ENCODE measurements at regions of chr19 and their contacts with region 1.

Region 1: GRCh38 chr19:4065430-4066175 is 1.1 kb downstream of the ZBTB7A start:
- DNase-seq: peak; percentile 81 to 94
- H3K4me3 ChIP-seq: no peak overlapping the region
- H3K27ac ChIP-seq: no peak overlapping the region
- H3K4me1 ChIP-seq: peaks cover 30% of the 10 kb centered on the region
- H3K27me3 ChIP-seq: no peaks in the 10 kb centered on the region
- CTCF ChIP-seq: no peak

Region 2: DNA sequence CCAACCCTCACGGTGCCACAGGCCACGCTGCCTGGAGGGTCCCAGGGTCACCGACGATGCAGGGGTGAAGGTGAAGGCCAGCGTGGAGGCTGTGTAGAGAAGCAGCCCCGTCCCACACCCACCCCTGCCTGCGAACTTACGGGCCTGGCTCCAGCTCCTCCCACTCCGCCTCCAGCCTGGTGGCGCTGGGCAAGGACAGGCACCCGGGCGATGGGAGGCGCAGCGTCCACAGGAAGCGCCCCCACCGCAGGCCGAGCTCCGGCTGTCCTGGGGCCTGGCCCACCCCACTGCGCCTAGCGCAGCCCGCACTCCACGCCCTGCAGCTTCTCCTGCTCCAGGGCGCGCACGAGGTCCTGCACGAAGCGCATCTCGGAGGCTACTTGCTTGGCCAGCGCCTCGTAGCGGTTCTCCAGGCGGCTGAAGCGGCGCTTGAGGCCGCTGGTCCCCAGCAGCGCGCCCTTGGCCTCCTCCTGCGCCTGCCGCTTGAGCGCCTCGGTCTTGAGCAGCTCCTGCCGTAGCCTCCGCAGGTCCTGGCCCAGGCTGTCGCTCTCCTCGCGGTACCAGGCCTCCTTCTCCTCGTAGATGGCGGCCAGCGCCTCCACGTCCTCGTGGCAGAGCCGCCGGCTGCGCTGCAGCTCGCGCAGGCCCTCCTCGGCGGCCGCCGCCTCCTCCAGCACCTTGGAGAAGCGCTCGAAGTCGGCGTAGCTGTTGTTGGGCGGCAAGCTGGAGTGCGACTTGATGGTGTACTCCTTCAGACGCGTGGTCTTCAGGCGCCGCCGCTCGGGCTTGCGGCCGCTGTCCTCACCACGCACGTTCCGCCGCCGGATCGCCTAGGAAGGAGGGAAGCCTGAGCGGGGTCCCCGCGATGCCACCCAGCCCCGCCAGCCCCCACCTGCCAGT is 106.5 kb before region 1 on chr19:
- CTCF ChIA-PET with region 1: no interaction called
- POLR2A ChIA-PET with region 1: interaction called, 10 read pairs
- intact Hi-C with region 1: no loop called
- DNase-seq: no peak
- H3K4me3 ChIP-seq: no peak overlapping the region
- H3K27ac ChIP-seq: no peak overlapping the region
- H3K4me1 ChIP-seq: no peaks in the 10 kb centered on the region
- H3K27me3 ChIP-seq: no peaks in the 10 kb centered on the region
- CTCF ChIP-seq: no peak

Region 3: DNA sequence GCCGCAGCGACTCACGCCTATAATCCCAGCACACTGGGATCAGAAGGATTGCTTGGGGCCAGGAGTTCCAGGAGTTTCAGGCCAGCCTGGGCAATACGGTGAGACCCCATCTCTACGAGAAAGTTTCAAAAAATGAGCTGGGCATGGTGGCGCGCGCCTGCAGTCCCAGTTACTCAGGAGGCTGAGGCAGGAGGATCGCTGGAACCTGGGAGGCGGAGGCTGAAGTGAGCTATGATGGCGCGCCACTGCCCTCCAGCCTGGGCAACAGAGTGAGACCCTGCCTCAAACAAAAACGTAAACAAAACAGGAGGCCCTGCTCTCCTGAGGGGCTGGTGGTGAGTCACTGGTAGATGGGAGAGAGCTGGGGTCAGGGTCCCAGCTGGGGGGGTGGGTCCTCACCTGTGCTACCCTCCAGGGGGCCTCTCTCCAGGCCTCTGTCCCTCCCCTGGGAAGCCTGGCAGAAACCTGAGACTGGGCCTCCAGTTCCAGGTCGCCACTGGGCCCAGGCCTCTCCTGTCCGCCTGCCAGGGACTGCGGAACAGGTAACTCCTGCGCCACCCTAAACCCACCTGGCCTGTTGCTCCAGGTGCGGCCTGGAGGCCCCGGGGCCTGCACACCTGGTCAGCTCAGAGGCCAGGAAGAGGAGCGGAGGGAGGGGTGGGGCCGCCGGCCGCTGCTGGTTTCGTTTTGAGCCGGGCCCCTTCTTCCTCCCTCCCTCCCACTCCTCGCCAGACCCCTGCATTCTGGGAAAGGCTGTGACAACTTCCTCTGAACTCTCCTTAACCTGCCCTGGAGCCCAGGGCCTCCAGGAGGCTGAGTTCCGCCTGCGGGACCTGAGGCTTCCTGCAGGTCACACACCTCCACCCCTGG is 18.3 kb after region 1 on chr19:
- CTCF ChIA-PET with region 1: no interaction called
- POLR2A ChIA-PET with region 1: no interaction called
- intact Hi-C with region 1: loop called (anchors 1 kb)
- DNase-seq: peak; percentile 82 to 86
- H3K4me3 ChIP-seq: peak overlapping the region; percentile 43; the same call in 1 of the 2 replicates
- H3K27ac ChIP-seq: peak overlapping the region; percentile 80
- H3K4me1 ChIP-seq: peaks cover 31% of the 10 kb centered on the region
- H3K27me3 ChIP-seq: no peaks in the 10 kb centered on the region
- CTCF ChIP-seq: no peak

Region 4: GRCh38 chr19:4182084-4182810 is 116.6 kb after region 1 on chr19 and contains the starts of genes ANKRD24 and SIRT6:
- CTCF ChIA-PET with region 1: no interaction called
- POLR2A ChIA-PET with region 1: no interaction called
- intact Hi-C with region 1: loop called (anchors 5 kb)
- DNase-seq: peak; percentile 82 to 89
- H3K4me3 ChIP-seq: peak within 1 kb of the TSS; percentile 91
- H3K27ac ChIP-seq: peak within 1 kb of the TSS; percentile 38; the same call in 1 of the 2 replicates
- H3K4me1 ChIP-seq: peaks cover 4% of the 10 kb centered on the region; the same call in 1 of the 2 replicates
- H3K27me3 ChIP-seq: no peaks in the 10 kb centered on the region
- CTCF ChIP-seq: no peak
- total RNA-seq, gene ANKRD24: 0.79 and 1.0 TPM in 2 replicates
- total RNA-seq, gene SIRT6: 22.2 and 23.2 TPM in 2 replicates

Measured in PC-9 (cell line).